Tibial artery (tissue), 4 donors: ENCODE measurements at regions of chr4 and their contacts with region 1.

Region 1: DNA sequence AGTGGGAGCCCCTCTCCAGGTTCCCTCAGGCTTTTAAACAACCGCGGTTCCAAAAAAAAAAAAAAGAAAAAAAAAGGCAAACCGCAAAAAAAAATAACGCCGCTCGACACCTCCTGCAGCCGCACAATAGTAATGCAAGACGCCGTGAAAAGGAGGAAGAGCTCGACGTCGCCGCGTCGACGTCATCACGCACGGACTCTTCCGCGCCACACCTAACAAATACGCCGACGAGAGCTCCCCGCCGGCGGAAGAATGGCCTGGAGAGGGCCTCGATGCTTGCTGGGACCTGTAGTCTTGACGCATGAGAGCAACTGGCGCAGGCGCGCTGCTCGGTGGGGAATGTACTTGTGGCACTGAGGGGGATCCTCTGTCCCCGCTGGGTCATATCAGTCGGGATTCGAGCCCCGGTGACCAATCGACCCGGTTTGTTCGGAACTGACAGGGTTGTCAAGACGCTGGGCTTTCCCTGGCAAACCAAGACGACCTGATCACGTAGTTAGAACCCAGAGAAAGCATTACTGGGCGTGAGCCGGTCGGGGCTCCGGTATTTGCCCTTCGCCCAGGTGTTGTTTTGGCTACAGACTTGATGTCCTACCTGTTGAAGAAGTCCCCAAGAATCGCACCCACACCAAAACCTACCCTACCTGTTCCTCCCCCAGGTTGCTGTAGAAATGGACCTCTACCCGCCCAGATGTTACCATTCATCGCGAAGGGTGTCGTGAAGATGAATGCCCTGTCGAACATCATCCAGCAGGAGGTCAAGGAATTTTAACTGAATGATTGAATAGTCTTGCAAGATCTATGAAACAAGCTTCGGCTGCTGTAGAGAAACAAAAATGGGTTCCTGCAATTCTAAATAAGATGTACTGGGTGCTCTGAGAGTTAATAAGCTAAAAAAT is at the start of gene CBR4:
- DNase-seq: peak; percentile 99
- H3K4me3 ChIP-seq: peak within 1 kb of the TSS; percentile 63 to 85
- H3K27ac ChIP-seq: peak within 1 kb of the TSS; percentile 80 to 89
- H3K4me1 ChIP-seq: peaks cover 0 to 29% (median 10%) of the 10 kb centered on the region in 4 donors
- H3K27me3 ChIP-seq: no peaks in the 10 kb centered on the region
- CTCF ChIP-seq: peak; percentile 26 to 28

Region 2: DNA sequence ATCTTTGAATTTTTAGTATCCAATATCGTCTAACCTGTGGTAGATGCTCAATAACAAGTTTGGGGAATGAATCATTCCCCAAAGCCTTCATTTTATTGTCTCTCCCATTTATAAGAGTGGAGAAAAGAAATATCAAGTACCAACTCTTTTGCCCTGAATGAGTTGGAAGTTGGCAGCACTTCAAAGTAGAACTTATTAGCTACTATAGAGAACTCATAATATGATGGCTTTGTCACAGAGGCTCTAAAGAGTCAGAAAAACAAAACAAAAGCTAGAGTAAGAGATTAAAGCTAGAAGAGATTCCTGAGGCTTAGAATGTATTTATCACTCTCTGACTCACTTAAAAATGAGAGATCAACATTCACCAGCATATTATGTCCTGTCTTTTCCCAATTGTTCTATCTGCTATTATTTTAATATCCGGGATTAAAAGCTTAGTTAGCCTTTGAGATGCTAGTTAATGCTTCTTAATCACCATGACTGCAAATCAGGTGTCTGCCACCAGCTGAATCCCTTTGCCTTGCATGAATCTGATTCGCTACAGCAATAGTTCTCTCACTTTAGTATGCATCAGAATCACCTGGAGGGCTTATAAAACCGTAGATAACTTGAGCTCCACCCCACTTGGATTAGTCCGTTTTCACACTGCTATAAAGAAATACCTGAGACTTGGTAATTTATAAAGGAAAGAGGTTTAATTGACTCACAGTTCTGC is 435.6 kb before region 1 on chr4:
- intact Hi-C with region 1: loop called (anchors 10 kb)
- DNase-seq: no peak
- H3K4me3 ChIP-seq: no peak overlapping the region
- H3K27ac ChIP-seq: no peak overlapping the region
- H3K4me1 ChIP-seq: peaks cover 0 to 14% (median 7%) of the 10 kb centered on the region in 4 donors
- H3K27me3 ChIP-seq: no peaks in the 10 kb centered on the region
- CTCF ChIP-seq: no peak

Region 3: DNA sequence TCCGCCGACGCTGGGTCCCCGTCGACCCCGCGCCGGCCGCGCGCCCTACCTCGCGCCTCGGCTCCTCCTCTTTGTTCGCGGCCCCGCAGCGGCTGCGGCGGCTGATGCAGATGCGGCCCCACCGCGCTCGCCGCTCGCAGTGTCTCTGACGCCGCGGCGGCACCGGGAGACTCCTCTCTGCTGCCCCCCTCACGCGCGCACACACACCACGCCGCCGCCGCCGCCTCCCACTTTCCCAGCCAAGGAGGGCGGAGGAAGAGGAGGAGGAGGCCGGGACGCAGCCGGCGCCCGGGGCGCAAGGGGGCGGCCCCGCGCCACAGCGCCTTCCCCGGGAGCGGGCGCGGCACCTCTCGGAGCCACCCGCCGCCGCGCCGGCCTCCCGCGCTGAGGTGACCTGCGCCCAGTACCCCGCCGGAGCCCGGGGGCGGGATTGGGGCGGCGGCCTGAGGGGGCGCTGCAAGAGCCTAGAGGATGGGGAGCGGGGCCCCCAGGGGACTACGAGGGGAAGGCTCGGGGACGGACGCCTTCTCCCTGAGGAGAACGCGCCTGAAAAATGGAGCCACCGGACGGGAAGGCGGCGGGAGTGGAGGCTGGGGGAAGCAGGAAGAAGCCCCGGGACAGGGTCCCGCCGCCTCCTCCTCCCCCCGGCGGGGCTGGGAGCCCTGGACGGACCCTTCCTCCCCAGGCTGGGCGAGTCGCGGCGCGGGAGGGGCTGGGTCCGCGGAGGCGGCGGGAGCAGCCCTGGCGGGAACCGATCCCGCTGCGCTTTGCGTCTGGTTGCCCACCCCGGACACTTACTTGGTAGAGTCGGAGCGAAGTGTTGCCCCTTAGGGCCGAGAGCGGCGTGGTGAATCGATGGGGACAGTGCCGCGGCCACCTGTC is 260.7 kb after region 1 on chr4 and contains the start of gene SH3RF1:
- intact Hi-C with region 1: loop called (anchors 2 kb)
- DNase-seq: peak; percentile 93 to 95
- H3K4me3 ChIP-seq: peak within 1 kb of the TSS; percentile 67 to 70
- H3K27ac ChIP-seq: peak within 1 kb of the TSS; percentile 86 to 91
- H3K4me1 ChIP-seq: peaks cover 0 to 51% (median 16%) of the 10 kb centered on the region in 4 donors
- H3K27me3 ChIP-seq: no peaks in the 10 kb centered on the region
- CTCF ChIP-seq: peak; percentile 19 to 29

Region 4: DNA sequence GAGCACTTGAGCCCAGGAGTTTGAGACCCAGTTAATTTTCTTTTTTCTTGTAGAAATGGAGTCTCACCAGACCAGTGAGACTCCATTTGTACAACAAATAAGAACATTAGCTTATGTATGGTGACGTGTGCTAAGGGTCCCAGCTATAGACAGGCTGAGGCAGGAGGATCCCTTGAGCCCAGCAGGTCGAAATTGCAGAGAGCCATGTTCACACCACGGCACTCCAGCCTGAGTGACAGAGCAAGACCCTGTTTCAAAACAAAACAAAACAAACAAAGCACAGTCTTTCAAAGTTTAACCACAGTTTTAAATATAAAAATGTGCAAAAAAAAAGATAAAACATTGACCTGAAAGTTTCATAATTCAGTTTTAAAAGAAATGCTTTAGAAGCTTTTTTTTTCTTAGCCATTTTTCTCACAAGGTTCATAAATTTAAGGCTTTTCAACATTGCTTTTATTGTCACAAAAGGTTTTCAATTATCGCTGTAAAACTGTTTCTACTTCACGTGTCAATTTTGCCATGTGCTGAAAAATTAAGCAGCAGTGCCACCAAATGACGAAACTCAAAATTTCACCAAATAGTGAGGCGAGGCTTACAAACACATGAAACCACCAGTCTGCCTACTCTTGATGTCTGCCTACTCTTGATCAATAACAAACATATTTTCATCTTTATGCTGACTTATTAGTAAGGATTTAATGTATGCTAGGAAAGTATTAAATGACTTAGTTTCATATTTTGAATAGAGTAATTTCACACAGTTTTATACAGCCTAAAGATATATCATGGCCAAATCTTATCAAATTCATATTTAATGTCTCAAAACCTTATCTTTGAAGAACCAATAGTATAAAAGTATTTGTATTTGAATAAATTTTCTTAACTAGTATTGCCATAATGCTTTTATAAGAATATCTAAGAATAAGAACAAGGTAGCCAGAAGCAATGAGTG is 475.7 kb after region 1 on chr4:
- intact Hi-C with region 1: loop called (anchors 10 kb)
- DNase-seq: no peak
- H3K4me3 ChIP-seq: no peak overlapping the region
- H3K27ac ChIP-seq: no peak overlapping the region
- H3K4me1 ChIP-seq: no peaks in the 10 kb centered on the region
- H3K27me3 ChIP-seq: no peaks in the 10 kb centered on the region
- CTCF ChIP-seq: peak; percentile 51 to 52